Naive thymus-derived CD8-positive, alpha-beta T cell (primary cell): ENCODE measurements at regions of chr3 and their contacts with region 1.

Region 1: GRCh38 chr3:51974963-51975851 is at the start of gene ABHD14A:
- DNase-seq: peak; percentile 57 to 81 (median 72)
- ATAC-seq: peak; percentile 70 to 80
- H3K4me3 Mint-ChIP-seq: peak within 1 kb of the TSS; percentile 89 to 97 (median 94)
- H3K27ac Mint-ChIP-seq: peak within 1 kb of the TSS; percentile 91 to 96 (median 95)
- H3K4me1 Mint-ChIP-seq: peaks cover 23 to 54% (median 39%) of the 10 kb centered on the region in 4 donors
- H3K27me3 Mint-ChIP-seq: no peaks in the 10 kb centered on the region
- polyA plus RNA-seq, gene ABHD14A: 94.6 to 100 (median 94.9) TPM

Region 2: DNA sequence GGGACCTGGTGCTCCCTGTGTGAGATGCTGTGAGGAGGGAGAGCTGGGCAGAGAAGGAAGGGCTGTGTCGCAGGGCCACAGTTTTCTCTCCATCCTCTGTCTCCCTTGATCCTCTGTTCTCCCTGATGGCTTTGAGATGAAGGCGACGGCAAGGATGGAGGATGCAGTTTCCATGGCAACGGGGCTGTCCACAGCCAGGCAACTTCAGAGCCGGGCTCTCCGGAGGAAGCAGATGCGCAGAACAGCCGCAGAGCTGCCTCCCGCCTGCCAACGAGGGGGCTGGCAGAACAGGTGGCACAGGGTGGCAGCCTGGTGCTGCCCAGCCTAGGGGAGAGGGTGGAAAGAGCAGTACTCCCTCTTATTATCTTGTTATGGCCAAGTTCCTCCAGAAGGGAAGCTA is 278.3 kb before region 1 on chr3:
- POLR2A ChIA-PET with region 1: no interaction called
- DNase-seq: no peak
- ATAC-seq: no peak
- H3K4me3 Mint-ChIP-seq: no peak overlapping the region
- H3K27ac Mint-ChIP-seq: peak overlapping the region in 3 of 10 donors; percentile 28 to 50 (median 41)
- H3K4me1 Mint-ChIP-seq: peaks cover 7 to 44% (median 20%) of the 10 kb centered on the region in 4 donors
- H3K27me3 Mint-ChIP-seq: no peaks in the 10 kb centered on the region

Region 3: DNA sequence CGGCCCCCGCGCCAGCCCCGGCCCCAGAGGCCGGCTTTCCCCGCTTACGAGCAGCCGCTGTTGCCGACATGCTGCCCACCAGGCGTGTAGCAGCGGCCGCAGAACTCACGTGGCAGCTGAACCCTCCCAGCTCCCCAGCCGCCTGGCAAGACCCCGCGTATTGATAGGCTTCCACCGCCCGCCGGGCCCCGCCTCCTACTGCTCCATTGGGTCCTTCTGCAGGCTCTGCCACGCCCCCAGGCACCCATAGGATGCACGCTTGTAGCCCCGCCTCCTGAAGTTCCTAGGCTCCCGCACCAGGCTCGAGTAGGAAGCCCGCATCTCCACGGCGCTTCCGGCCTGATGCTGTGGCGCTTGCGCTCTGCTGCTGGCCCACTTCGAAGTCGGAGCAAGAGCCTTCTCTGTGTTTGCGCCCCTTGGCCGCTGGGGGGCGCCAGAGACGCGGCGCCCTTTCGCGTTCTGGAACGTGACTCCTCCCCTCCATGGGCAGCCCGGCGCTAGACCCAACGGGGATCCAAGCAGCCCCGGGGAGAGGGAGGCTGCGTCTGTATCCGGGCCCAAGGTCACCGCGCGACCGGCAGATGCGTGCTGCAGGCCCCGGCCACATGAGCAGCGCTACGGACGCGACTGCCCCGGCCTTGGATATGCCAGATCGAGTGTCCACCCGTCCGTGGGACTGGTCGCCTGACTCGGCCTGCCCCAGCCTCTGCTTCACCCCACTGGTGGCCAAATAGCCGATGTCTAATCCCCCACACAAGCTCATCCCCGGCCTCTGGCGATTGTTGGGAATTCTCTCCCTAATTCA is 33.2 kb before region 1 on chr3 and contains the starts of genes PARP3 and RRP9:
- POLR2A ChIA-PET with region 1: interaction called, 42 read pairs
- DNase-seq: peak; percentile 97 to 100 (median 99)
- ATAC-seq: peak; percentile 91 to 93
- H3K4me3 Mint-ChIP-seq: peak within 1 kb of the TSS; percentile 83 to 98 (median 93)
- H3K27ac Mint-ChIP-seq: peak within 1 kb of the TSS; percentile 76 to 95 (median 91)
- H3K4me1 Mint-ChIP-seq: peaks cover 16 to 47% (median 41%) of the 10 kb centered on the region in 4 donors
- H3K27me3 Mint-ChIP-seq: no peaks in the 10 kb centered on the region
- polyA plus RNA-seq, gene PARP3: 4.6 to 9.0 (median 5.5) TPM
- polyA plus RNA-seq, gene RRP9: 18.1 to 29.6 (median 19.6) TPM

Region 4: GRCh38 chr3:51963951-51964451 is 11.2 kb before region 1 on chr3:
- POLR2A ChIA-PET with region 1: interaction called, 11 read pairs
- DNase-seq: peak in 1 of 10 donors; percentile 60
- ATAC-seq: no peak
- H3K4me3 Mint-ChIP-seq: no peak overlapping the region
- H3K27ac Mint-ChIP-seq: no peak overlapping the region
- H3K4me1 Mint-ChIP-seq: peaks cover 13 to 34% (median 23%) of the 10 kb centered on the region in 4 donors
- H3K27me3 Mint-ChIP-seq: no peaks in the 10 kb centered on the region